ENCODE measurements at regions of chr1 and their contacts with region 1.

Region 1: DNA sequence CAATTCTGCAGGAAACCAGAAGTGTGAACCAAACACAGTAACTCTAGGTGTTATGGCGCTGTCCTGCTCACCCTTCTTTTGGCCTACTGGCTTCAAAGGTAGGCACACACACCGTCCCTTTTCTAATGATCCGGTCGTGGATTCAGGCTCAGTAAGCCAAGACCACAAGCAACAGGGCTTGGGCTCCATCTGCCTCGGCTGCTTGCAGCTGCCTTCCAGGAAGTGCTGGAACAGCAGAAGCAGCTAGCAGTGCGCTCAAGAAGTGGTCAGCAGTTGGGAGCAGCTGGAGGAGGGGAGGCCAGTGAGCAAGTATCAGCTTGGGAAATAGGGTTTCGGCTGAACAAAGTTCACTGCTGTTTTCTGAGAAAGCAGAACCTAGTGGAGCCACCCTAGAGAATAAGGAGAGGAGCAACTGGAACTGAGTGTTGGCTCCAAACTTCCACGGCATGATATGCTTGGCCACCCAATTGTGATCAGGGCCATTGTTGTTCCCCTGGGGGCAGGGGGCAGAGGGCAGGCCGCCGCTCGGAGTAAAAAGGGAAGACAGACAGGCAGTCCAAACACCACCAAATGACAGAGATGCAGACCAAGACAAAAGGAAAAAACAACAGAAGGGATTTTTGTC is 173.4 kb downstream of the TOMM20 start:
- DNase-seq: no peak
- ATAC-seq: peak; percentile 2; the same call in 1 of the 3 replicates
- H3K4me3 ChIP-seq: peak overlapping the region in 1 of 3 experiments; percentile 5; a peak in 1 of 6 replicates
- H3K27ac ChIP-seq: peak overlapping the region; percentile 100
- H3K4me1 ChIP-seq: peaks cover 85% of the 10 kb centered on the region
- H3K27me3 ChIP-seq: no peaks in the 10 kb centered on the region
- CTCF ChIP-seq: peak; percentile 5; the same call in 1 of the 2 replicates
- EP300 ChIP-seq: no peak; a peak in 1 of 4 replicates
- POLR2A ChIP-seq: 0 out of 4 replicates have a peak, but pooled peaks of 1 of the 2 experiments have one; percentile 36
- RAD21 ChIP-seq: 0 out of 2 replicates have a peak, but pooled peaks have one; percentile 10

Region 2: DNA sequence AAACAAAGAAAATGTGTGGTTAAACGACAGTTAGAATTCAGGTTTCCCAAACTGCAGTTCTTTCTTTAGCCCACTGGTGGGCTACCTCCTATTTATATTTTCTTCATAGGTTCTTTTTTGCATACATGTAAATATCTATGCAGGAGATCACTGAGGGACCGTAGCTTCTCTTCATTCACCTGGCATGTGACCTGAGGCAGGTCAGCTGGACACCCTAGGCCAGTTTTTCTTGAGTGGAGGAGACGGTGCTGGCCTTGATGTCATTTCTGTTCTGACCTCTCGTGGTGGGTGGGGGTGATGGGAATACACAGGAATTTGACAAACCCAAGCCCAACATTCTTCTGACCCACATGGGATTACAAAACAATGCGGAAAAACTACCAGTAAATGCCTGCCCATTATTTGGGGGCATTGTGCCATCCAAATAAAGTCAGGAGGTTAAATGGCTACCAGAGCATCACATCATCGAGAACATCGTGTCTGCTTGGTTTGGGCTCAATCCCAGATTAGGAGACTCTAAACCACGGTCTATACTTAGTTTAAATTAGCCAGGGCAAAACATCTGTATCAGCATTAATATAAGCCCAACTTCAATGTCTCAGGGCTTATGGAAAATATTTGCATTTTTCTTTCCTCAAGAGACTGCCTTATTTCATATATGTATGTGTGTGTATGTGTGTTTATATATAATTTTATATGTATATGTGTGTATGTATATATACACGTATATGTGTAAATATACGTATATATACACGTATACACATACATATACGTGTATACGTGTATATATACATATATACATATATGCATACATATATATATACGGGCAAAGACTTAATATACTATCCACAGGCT is 337.9 kb before region 1 on chr1:
- CTCF ChIA-PET with region 1: no interaction called
- POLR2A ChIA-PET with region 1: interaction called, 119 read pairs
- in situ Hi-C with region 1: loop called (anchors 5 kb)
- intact Hi-C with region 1: loop called (anchors 1 kb)
- DNase-seq: no peak
- ATAC-seq: no peak
- H3K4me3 ChIP-seq: no peak overlapping the region
- H3K27ac ChIP-seq: peak overlapping the region; percentile 99
- H3K4me1 ChIP-seq: peaks cover 97% of the 10 kb centered on the region
- H3K27me3 ChIP-seq: no peaks in the 10 kb centered on the region
- CTCF ChIP-seq: no peak
- EP300 ChIP-seq: no peak
- POLR2A ChIP-seq: no peak
- RAD21 ChIP-seq: no peak

Region 3: GRCh38 chr1:234862944-234863515 is 92.2 kb before region 1 on chr1:
- CTCF ChIA-PET with region 1: no interaction called
- POLR2A ChIA-PET with region 1: interaction called, 11 read pairs
- in situ Hi-C with region 1: no loop called
- intact Hi-C with region 1: no loop called
- DNase-seq: peak; percentile 65
- ATAC-seq: peak; percentile 86
- H3K4me3 ChIP-seq: peak overlapping the region; percentile 6 to 47 (median 27); a peak in 4 of 6 replicates
- H3K27ac ChIP-seq: peak overlapping the region; percentile 84
- H3K4me1 ChIP-seq: peaks cover 69% of the 10 kb centered on the region
- H3K27me3 ChIP-seq: no peaks in the 10 kb centered on the region
- CTCF ChIP-seq: no peak
- EP300 ChIP-seq: no peak; a peak in 1 of 4 replicates
- POLR2A ChIP-seq: peak in 1 of 2 experiments; percentile 37; a peak in 1 of 4 replicates
- RAD21 ChIP-seq: no peak

Region 4: DNA sequence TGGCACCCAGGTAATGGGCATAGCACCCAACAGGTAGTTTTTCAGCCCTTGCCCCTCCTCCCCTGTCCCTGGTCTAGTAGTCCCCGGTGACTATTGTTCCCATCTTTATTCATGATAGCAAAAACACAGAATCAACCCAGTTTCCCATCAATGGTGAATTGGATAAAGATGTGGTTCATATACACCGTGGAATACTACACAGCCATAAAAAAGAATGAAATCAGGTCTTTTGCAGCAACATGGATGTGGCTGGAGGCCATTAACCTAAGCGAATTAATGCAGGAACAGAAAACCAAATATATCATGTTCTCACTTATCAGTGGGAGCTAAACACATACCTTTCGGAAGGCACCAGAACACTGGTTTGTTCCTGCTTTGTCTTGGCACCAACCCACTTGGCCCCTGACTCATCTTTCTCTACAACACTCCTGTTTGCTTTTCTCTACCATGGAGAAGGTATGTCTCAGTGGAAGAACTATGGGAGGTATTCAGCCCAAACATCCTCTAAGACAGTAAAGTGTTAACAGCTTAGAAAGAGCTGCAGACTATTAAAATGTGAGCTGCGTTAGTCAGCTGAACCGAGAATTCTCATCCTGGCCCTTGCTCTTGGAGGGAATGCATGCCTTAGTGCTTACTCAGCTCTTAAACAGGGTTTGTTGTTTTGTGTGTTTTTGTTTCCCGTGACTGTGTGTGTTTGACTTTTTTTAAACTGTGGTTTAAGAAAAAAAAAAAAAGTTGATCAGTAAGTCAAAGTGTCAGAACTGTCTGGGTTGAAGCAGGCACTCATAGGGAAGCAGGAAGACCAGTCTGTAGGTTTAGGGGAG is 29.6 kb before region 1 on chr1:
- CTCF ChIA-PET with region 1: no interaction called
- POLR2A ChIA-PET with region 1: interaction called, 25 read pairs
- in situ Hi-C with region 1: no loop called
- intact Hi-C with region 1: loop called (anchors 5 kb)
- DNase-seq: peak; percentile 80
- ATAC-seq: peak; percentile 64
- H3K4me3 ChIP-seq: no peak overlapping the region
- H3K27ac ChIP-seq: no peak overlapping the region
- H3K4me1 ChIP-seq: peaks cover 48% of the 10 kb centered on the region
- H3K27me3 ChIP-seq: no peaks in the 10 kb centered on the region
- CTCF ChIP-seq: no peak
- EP300 ChIP-seq: peak in 1 of 2 experiments; percentile 44; a peak in 1 of 4 replicates
- POLR2A ChIP-seq: no peak
- RAD21 ChIP-seq: no peak

Region 5: GRCh38 chr1:234987415-234988154 is 32.4 kb after region 1 on chr1:
- CTCF ChIA-PET with region 1: no interaction called
- POLR2A ChIA-PET with region 1: interaction called, 21 read pairs
- in situ Hi-C with region 1: no loop called
- intact Hi-C with region 1: no loop called
- DNase-seq: peak; percentile 95
- ATAC-seq: peak; percentile 97
- H3K4me3 ChIP-seq: peak overlapping the region; percentile 13 to 53 (median 24); a peak in 4 of 6 replicates
- H3K27ac ChIP-seq: peak overlapping the region; percentile 95
- H3K4me1 ChIP-seq: peaks cover 93% of the 10 kb centered on the region
- H3K27me3 ChIP-seq: no peaks in the 10 kb centered on the region
- CTCF ChIP-seq: 0 out of 2 replicates have a peak, but pooled peaks have one; percentile 9
- EP300 ChIP-seq: peak; percentile 62 to 68; a peak in 2 of 4 replicates
- POLR2A ChIP-seq: peak; percentile 55 to 80; a peak in 3 of 4 replicates
- RAD21 ChIP-seq: 0 out of 2 replicates have a peak, but pooled peaks have one; percentile 19